MCF 10A (cell line): ENCODE measurements at regions of chr16 and their contacts with region 1.

Region 1: DNA sequence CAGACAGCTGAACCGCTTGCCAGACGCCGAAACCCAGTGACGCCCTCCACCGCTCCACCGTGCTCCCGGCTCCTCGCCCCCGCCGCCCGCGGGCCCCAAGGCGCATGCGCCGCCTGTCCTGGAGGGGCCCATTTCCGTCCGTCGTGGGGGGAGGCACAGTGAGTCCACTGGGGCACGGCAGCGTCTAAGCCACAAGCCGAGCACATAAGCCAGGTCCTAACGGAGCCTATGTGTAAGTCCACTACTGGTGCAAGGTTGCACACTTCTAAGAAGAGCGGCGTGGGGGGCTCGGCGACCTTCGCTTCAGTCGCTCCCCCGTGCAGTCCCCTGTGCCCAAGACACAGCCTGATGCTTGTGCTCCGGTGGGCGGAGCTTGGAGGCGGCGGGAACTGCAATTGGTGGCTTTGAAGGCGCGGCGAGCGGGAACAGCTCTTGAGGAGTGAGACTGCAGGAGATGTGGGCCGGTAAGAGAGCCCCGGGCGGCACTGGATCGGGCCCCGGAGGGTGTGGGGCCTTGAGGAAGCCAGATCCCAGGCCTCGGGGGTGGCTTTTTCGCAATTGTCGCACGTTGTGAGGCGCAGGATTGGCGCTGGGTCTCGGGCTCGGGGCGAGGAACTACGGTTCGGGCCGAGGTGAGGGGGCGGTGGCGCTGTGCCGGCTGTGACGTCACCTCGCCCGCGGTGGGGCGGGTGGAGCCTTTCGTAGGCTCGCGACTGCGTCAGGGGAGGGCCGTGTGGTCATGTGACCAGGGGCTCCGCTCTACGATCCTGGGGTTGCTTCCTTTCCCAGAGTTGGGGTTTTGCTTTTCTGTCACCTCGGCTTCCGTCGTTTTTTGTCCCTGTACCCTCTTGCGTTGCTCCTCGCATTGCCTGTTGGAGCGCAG is at the starts of genes CENPN and CMC2:
- DNase-seq: peak; percentile 98
- H3K4me3 Mint-ChIP-seq: peak within 1 kb of the TSS; percentile 99
- H3K27ac Mint-ChIP-seq: peak within 1 kb of the TSS; percentile 99
- H3K4me1 Mint-ChIP-seq: peaks cover 38% of the 10 kb centered on the region
- H3K27me3 Mint-ChIP-seq: no peaks in the 10 kb centered on the region
- CTCF ChIP-seq: no peak
- total RNA-seq, gene CENPN: 29.5 and 38.4 TPM in 2 replicates
- total RNA-seq, gene CMC2: 83.0 and 102 TPM in 2 replicates

Region 2: GRCh38 chr16:80837421-80838231 is 169.4 kb before region 1 on chr16:
- CTCF ChIA-PET with region 1: no interaction called
- POLR2A ChIA-PET with region 1: no interaction called
- intact Hi-C with region 1: no loop called
- DNase-seq: no peak
- H3K4me3 Mint-ChIP-seq: no peak overlapping the region
- H3K27ac Mint-ChIP-seq: no peak overlapping the region
- H3K4me1 Mint-ChIP-seq: no peaks in the 10 kb centered on the region
- H3K27me3 Mint-ChIP-seq: peaks cover 19% of the 10 kb centered on the region
- CTCF ChIP-seq: no peak

Region 3: DNA sequence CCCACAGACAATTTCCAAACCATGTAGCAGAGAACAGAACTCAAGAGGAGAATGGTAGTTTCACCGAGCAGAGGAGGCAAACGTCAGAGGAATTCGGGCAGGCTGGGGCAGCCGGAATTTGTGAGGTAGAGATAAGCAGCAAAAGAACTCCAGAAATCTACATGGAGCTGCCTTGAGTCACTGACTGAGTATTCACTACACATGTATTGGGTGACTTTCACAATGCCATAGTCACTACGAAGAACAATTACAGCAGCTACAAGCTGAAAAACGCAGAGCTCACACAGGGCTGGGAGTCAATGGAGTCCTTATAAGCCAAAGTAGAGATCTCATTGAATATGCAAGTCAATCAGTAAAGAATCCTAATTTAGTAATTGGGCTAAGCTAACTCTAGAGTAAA is 13.7 kb before region 1 on chr16:
- CTCF ChIA-PET with region 1: interaction called, 34 read pairs
- POLR2A ChIA-PET with region 1: interaction called, 64 read pairs
- intact Hi-C with region 1: no loop called
- DNase-seq: peak; percentile 67
- H3K4me3 Mint-ChIP-seq: peak overlapping the region; percentile 67
- H3K27ac Mint-ChIP-seq: peak overlapping the region; percentile 92
- H3K4me1 Mint-ChIP-seq: peaks cover 23% of the 10 kb centered on the region
- H3K27me3 Mint-ChIP-seq: no peaks in the 10 kb centered on the region
- CTCF ChIP-seq: no peak